ENCODE measurements at regions of chr4 and their contacts with region 1.

Region 1: GRCh38 chr4:152126238-152126637 is 365.4 kb upstream of the GATB start:
- DNase-seq: no peak
- ATAC-seq: no peak
- H3K4me3 ChIP-seq: no peak overlapping the region
- H3K27ac ChIP-seq: no peak overlapping the region
- H3K4me1 ChIP-seq: no peaks in the 10 kb centered on the region
- H3K27me3 ChIP-seq: no peaks in the 10 kb centered on the region
- CTCF ChIP-seq: no peak
- POLR2A ChIP-seq: no peak

Region 2: GRCh38 chr4:151581570-151581969 is 544.7 kb before region 1 on chr4:
- in situ Hi-C with region 1: no loop called
- intact Hi-C with region 1: no loop called
- DNase-seq: no peak
- ATAC-seq: no peak
- H3K4me3 ChIP-seq: no peak overlapping the region
- H3K27ac ChIP-seq: no peak overlapping the region
- H3K4me1 ChIP-seq: peaks cover 20 to 50% of the 10 kb centered on the region in 2 donors
- H3K27me3 ChIP-seq: no peaks in the 10 kb centered on the region
- CTCF ChIP-seq: no peak
- POLR2A ChIP-seq: no peak

Region 3: DNA sequence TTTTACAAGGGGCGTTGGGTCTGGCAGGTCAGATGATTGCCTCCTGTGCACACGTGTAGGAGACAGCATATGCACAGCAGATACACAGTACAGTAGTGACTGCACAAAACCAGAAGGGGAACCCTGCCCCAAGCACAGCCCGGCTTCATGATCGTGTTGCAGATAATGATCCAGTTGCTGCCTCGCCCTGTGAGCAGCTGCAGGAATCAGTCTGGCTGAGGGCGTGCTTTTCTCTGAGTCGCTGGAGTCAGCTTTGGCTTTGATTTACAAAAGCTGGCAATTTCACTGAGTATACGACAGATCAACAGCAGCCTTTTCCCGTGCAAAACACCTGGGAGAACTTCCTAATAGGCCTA is 62.4 kb before region 1 on chr4:
- in situ Hi-C with region 1: no loop called
- intact Hi-C with region 1: no loop called
- DNase-seq: peak; percentile 37 to 47
- ATAC-seq: peak; percentile 91 to 92
- H3K4me3 ChIP-seq: peak overlapping the region in 1 of 4 donors; percentile 13
- H3K27ac ChIP-seq: peak overlapping the region in 3 of 4 donors; percentile 44 to 65 (median 50)
- H3K4me1 ChIP-seq: peaks cover 11 to 20% of the 10 kb centered on the region in 2 donors
- H3K27me3 ChIP-seq: no peaks in the 10 kb centered on the region
- CTCF ChIP-seq: peak in 2 of 5 experiments; percentile 18 to 39
- POLR2A ChIP-seq: no peak

Region 4: GRCh38 chr4:152160225-152160800 is 34.1 kb after region 1 on chr4:
- in situ Hi-C with region 1: no loop called
- intact Hi-C with region 1: loop called (anchors 1 kb)
- DNase-seq: no peak
- ATAC-seq: no peak
- H3K4me3 ChIP-seq: no peak overlapping the region
- H3K27ac ChIP-seq: no peak overlapping the region
- H3K4me1 ChIP-seq: peaks cover 4 to 8% of the 10 kb centered on the region in 2 donors
- H3K27me3 ChIP-seq: no peaks in the 10 kb centered on the region
- CTCF ChIP-seq: no peak
- POLR2A ChIP-seq: no peak